GM12878 (cell line): ENCODE measurements at regions of chr10 and their contacts with region 1.

Region 1: GRCh38 chr10:110746254-110746826 is 102.2 kb downstream of the RBM20 start:
- DNase-seq: no peak
- ATAC-seq: peak; percentile 73
- H3K4me3 ChIP-seq: no peak overlapping the region
- H3K27ac ChIP-seq: peak overlapping the region; percentile 94; the same call in 1 of the 2 replicates
- H3K4me1 ChIP-seq: peaks cover 31% of the 10 kb centered on the region
- H3K27me3 ChIP-seq: no peaks in the 10 kb centered on the region
- CTCF ChIP-seq: peak; percentile 66 to 78 (median 76)
- EP300 ChIP-seq: no peak
- POLR2A ChIP-seq: no peak
- RAD21 ChIP-seq: peak; percentile 96

Region 2: GRCh38 chr10:110058212-110058611 is 688.1 kb before region 1 on chr10:
- CTCF ChIA-PET with region 1: no interaction called
- POLR2A ChIA-PET with region 1: no interaction called
- RAD21 ChIA-PET with region 1: no interaction called
- SMC1A ChIA-PET with region 1: no interaction called
- in situ Hi-C with region 1: no loop called
- intact Hi-C with region 1: no loop called
- DNase-seq: no peak
- ATAC-seq: peak; percentile 66
- H3K4me3 ChIP-seq: peak overlapping the region; percentile 31; the same call in 1 of the 2 replicates
- H3K27ac ChIP-seq: peak overlapping the region; percentile 9; the same call in 1 of the 2 replicates
- H3K4me1 ChIP-seq: peaks cover 24% of the 10 kb centered on the region
- H3K27me3 ChIP-seq: no peaks in the 10 kb centered on the region
- CTCF ChIP-seq: no peak
- EP300 ChIP-seq: no peak
- POLR2A ChIP-seq: no peak
- RAD21 ChIP-seq: no peak

Region 3: DNA sequence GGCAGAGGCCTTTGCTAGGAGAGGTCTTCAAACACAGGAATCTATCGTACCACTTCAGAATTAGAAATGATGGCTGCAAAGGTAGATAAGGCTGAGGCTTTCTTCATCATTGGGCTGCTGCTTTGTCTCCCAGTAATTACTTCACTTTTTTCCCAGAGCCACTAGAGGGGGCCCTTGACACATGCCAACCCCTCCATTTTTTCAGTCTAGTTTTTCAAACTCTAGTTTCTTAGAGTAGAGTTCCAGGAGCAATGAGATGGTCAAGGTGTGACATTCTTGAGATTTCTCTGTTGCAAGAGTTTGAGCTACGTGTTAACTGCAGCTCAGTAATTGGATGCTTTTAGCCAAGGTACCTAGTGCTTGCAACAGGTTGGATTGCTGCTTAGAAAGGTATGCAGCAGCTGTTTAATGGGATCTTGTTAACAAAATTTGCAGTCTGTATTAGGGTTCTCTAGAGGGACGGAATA is 136.0 kb before region 1 on chr10:
- CTCF ChIA-PET with region 1: interaction called, 18 read pairs
- POLR2A ChIA-PET with region 1: no interaction called
- RAD21 ChIA-PET with region 1: interaction called, 6 read pairs
- SMC1A ChIA-PET with region 1: interaction called, 28 read pairs
- in situ Hi-C with region 1: no loop called
- intact Hi-C with region 1: loop called (anchors 1 kb)
- DNase-seq: peak; percentile 24
- ATAC-seq: peak; percentile 10; the same call in 2 of the 3 replicates
- H3K4me3 ChIP-seq: no peak overlapping the region
- H3K27ac ChIP-seq: no peak overlapping the region
- H3K4me1 ChIP-seq: peaks cover 31% of the 10 kb centered on the region
- H3K27me3 ChIP-seq: no peaks in the 10 kb centered on the region
- CTCF ChIP-seq: peak; percentile 85 to 92 (median 88)
- EP300 ChIP-seq: no peak
- POLR2A ChIP-seq: no peak
- RAD21 ChIP-seq: peak; percentile 98

Region 4: DNA sequence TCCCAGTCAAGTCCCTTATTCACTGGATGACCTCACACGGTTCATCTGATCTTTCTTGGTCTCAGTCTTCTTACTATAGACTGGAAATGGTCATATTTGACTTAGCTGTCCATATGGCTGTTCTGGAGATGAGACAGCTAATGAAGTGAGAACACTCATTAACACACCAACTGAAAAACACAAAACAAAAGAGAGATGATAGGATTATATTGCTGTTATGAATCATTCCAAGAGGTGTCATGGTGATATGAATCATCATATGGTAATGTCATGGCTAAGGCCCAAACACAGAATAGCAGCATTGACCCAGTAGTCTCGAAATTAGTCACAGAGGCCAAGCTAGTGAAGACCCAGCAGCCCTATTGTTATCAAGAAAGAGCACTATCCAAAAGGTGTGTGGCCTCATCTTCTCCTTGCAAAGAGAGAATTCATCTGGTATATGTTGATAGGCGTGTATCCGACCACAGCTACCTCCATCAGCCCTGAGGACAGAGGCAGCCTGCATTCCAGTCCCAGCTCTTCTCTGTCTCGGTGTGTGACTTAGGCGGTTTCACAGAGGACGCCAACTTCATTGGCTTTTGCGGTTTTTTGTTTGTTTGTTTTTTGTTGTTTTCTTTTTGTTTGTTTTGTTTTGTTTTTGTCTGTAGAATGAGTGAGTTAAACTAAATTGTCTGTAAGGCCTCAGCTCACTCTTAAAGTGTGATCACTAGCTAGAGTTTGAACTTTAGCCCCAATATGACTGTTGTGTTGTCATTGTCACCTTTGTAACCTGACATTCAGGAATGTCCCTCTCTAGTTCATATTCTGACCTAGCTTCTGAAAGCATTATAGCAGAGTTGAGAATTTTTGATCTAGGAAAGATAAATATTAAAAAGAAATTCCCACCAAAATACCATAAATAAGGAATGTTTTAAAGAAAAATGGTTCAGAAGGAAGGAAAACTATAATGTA is 28.0 kb after region 1 on chr10:
- CTCF ChIA-PET with region 1: interaction called, 15 read pairs
- POLR2A ChIA-PET with region 1: interaction called, 5 read pairs
- RAD21 ChIA-PET with region 1: interaction called, 26 read pairs
- SMC1A ChIA-PET with region 1: interaction called, 52 read pairs
- in situ Hi-C with region 1: no loop called
- intact Hi-C with region 1: loop called (anchors 1 kb)
- DNase-seq: peak; percentile 99
- ATAC-seq: peak; percentile 94
- H3K4me3 ChIP-seq: no peak overlapping the region
- H3K27ac ChIP-seq: peak overlapping the region; percentile 85
- H3K4me1 ChIP-seq: peaks cover 22% of the 10 kb centered on the region
- H3K27me3 ChIP-seq: no peaks in the 10 kb centered on the region
- CTCF ChIP-seq: no peak
- EP300 ChIP-seq: peak; percentile 100
- POLR2A ChIP-seq: peak; percentile 38; the same call in 1 of the 2 replicates
- RAD21 ChIP-seq: no peak

Region 5: GRCh38 chr10:110843031-110843430 is 96.7 kb after region 1 on chr10:
- CTCF ChIA-PET with region 1: interaction called, 4 read pairs
- POLR2A ChIA-PET with region 1: interaction called, 3 read pairs
- RAD21 ChIA-PET with region 1: interaction called, 17 read pairs
- SMC1A ChIA-PET with region 1: interaction called, 19 read pairs
- in situ Hi-C with region 1: no loop called
- intact Hi-C with region 1: loop called (anchors 1 kb)
- DNase-seq: peak; percentile 98
- ATAC-seq: peak; percentile 74
- H3K4me3 ChIP-seq: peak overlapping the region; percentile 68
- H3K27ac ChIP-seq: peak overlapping the region; percentile 97
- H3K4me1 ChIP-seq: peaks cover 53% of the 10 kb centered on the region
- H3K27me3 ChIP-seq: no peaks in the 10 kb centered on the region
- CTCF ChIP-seq: no peak
- EP300 ChIP-seq: peak; percentile 53 to 91; a peak in 3 of 4 replicates
- POLR2A ChIP-seq: no peak; the same call in 1 of the 2 replicates
- RAD21 ChIP-seq: peak; percentile 37; the same call in 1 of the 2 replicates

Region 6: DNA sequence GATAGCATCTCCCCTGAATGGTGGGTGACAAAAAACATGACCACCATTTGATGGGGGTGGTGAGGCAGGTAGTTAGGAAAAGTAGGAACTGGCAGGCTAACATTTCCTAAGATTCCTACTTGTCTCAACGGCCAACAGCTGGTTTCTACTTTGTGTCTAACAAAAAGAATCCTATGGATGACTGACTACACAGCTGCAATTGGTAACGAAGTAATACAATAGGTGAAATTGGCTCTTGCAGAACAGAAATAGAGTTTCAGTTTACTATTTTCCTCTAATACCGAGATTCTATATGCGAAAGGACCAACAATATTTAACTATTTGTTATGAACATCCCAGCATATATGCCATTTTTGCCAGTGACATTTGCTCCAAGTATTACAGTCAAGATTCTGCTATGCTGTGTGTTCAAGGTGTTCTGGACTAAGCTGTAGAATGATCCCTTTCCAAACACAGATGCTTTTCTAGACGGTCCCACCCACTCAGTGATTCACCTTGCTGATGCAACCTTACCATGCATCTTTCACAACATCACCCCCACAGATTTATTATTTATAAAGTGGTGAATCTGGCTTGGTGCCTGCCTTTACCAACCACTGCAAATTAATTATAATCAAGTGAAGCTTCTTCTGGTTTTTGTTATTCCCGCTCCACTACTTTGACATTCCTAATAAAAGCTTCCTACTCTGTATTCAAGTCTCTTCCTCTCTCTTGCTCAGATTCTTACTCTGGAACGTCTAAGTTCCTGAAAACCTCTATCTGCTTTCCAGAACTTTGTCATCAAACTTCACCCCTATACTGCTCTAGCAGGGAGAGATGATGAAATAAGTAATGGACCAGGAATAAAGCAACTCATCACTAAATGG is 155.8 kb after region 1 on chr10:
- CTCF ChIA-PET with region 1: interaction called, 15 read pairs
- POLR2A ChIA-PET with region 1: no interaction called
- RAD21 ChIA-PET with region 1: interaction called, 11 read pairs
- SMC1A ChIA-PET with region 1: interaction called, 52 read pairs
- in situ Hi-C with region 1: no loop called
- intact Hi-C with region 1: no loop called
- DNase-seq: no peak
- ATAC-seq: peak; percentile 49
- H3K4me3 ChIP-seq: no peak overlapping the region
- H3K27ac ChIP-seq: no peak overlapping the region
- H3K4me1 ChIP-seq: peaks cover 7% of the 10 kb centered on the region; the same call in 1 of the 2 replicates
- H3K27me3 ChIP-seq: no peaks in the 10 kb centered on the region
- CTCF ChIP-seq: no peak
- EP300 ChIP-seq: no peak
- POLR2A ChIP-seq: peak; percentile 12; the same call in 1 of the 2 replicates
- RAD21 ChIP-seq: no peak

Region 7: GRCh38 chr10:111076191-111076681 is 329.9 kb after region 1 on chr10:
- CTCF ChIA-PET with region 1: interaction called, 5 read pairs
- POLR2A ChIA-PET with region 1: no interaction called
- RAD21 ChIA-PET with region 1: no interaction called
- SMC1A ChIA-PET with region 1: interaction called, 5 read pairs
- in situ Hi-C with region 1: no loop called
- intact Hi-C with region 1: loop called (anchors 10 kb)
- DNase-seq: no peak
- ATAC-seq: peak; percentile 94
- H3K4me3 ChIP-seq: peak overlapping the region; percentile 45; the same call in 1 of the 2 replicates
- H3K27ac ChIP-seq: no peak overlapping the region
- H3K4me1 ChIP-seq: no peaks in the 10 kb centered on the region
- H3K27me3 ChIP-seq: peaks cover 10 to 23% of the 10 kb centered on the region in 2 experiments
- CTCF ChIP-seq: peak; percentile 71 to 75 (median 72)
- EP300 ChIP-seq: no peak
- POLR2A ChIP-seq: no peak
- RAD21 ChIP-seq: peak; percentile 62

Region 8: DNA sequence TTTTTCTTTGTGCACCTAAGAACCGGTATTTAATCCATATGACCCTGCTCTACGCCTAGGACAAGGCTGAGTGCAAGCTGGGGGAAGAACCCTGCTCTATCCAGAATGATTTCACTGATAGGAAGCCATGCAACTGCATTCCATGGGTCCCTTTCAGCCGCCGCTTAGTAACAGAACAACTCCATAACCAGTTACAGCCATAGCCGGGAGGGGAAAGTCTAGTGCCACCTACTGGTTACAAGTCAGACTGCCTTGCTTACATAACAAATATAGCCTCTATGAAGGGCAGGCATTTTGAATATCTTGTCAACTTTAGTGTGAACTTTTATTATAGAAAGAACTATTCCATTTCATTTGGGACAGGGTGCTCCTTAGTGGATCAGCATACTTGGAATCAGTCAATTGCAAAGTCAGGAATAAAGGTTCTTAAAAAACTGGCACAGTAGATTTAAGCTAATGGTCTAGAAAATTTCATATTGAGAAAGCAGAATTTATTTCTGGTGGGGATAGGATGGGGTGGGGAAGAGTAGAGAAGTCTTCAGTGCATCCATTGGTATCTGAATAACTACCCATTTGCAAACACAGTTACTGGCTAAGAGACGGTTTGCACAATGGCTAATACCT is 852.2 kb after region 1 on chr10:
- CTCF ChIA-PET with region 1: interaction called, 14 read pairs
- POLR2A ChIA-PET with region 1: no interaction called
- RAD21 ChIA-PET with region 1: interaction called, 3 read pairs
- SMC1A ChIA-PET with region 1: interaction called, 7 read pairs
- in situ Hi-C with region 1: no loop called
- intact Hi-C with region 1: loop called (anchors 5 kb)
- DNase-seq: peak; percentile 3
- ATAC-seq: peak; percentile 96
- H3K4me3 ChIP-seq: no peak overlapping the region
- H3K27ac ChIP-seq: no peak overlapping the region
- H3K4me1 ChIP-seq: no peaks in the 10 kb centered on the region; the same call in 1 of the 2 replicates
- H3K27me3 ChIP-seq: no peaks in the 10 kb centered on the region; a peak in 1 of 4 replicates
- CTCF ChIP-seq: peak; percentile 75 to 87 (median 78)
- EP300 ChIP-seq: no peak
- POLR2A ChIP-seq: no peak
- RAD21 ChIP-seq: peak; percentile 59